ENCODE measurements at regions of chr2 and their contacts with region 1.

Region 1: DNA sequence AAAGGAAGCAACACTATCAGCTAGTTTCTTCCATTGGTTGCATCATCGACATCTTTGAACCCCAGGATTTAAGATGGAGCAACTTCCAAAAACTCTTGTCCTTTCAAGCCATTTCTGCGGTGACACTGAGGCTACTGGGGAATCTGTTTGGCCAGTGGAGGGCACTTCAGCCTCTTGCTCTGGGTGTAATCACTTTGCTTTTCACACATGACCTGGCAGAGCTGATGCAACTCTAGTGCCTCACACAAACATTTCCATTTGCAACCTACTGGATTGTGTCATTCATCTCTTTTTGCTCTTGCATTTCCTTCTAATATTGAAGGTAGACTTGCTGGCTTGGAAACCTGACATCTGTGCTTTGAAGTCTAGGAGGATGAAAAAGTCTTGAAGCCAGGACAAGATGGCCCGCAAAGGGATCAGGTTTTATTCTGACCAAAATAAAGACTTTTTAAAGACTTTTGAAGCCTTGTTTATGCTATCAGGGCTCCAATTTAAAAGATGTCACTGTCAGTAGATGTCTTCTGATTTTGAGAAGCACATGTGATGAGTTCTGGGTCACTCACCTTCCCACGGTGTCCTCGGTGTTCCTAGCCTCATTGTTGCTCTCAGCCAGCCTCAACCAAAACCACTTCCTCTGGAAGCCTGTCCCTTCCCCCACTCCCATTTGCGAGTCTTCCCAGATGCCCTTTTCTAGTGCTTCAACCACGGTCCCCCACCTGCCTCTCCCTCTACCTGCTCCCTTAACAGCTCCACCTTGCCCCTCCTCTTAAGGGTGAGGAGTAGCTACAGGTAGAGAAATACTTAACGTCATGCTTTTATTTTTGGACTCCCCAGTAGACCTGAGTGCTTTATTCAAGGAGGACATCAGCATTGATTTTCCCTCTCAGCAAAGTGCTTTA is 69.7 kb upstream of the KCNE4 start:
- DNase-seq: peak; percentile 58
- H3K4me3 ChIP-seq: no peak overlapping the region
- H3K27ac ChIP-seq: no peak overlapping the region
- H3K4me1 ChIP-seq: peaks cover 7% of the 10 kb centered on the region
- H3K27me3 ChIP-seq: no peaks in the 10 kb centered on the region
- CTCF ChIP-seq: peak; percentile 49 to 77

Region 2: DNA sequence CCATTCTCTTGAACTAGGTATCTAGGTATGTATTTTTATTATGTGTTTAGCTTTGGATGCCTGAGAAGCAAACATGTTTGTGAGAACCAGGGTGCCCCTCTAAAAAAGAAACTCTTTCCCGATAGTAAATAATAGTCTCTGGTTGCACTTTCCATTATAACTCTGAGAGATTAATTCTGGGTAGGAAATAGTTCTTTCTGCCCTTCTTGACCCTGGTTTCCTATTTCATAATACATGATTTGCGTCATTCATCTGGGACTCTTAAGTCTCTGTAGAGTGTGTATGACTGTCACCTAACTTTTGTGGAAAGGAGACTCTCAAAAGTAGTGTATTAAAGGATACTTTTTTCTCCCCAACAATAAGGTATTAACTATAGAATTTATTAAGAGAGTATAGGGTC is 89.9 kb before region 1 on chr2:
- CTCF ChIA-PET with region 1: no interaction called
- dilution Hi-C with region 1: no loop called
- in situ Hi-C with region 1: no loop called
- intact Hi-C with region 1: no loop called
- DNase-seq: no peak
- H3K4me3 ChIP-seq: no peak overlapping the region
- H3K27ac ChIP-seq: peak overlapping the region; percentile 11
- H3K4me1 ChIP-seq: peaks cover 32% of the 10 kb centered on the region
- H3K27me3 ChIP-seq: no peaks in the 10 kb centered on the region
- CTCF ChIP-seq: no peak

Region 3: DNA sequence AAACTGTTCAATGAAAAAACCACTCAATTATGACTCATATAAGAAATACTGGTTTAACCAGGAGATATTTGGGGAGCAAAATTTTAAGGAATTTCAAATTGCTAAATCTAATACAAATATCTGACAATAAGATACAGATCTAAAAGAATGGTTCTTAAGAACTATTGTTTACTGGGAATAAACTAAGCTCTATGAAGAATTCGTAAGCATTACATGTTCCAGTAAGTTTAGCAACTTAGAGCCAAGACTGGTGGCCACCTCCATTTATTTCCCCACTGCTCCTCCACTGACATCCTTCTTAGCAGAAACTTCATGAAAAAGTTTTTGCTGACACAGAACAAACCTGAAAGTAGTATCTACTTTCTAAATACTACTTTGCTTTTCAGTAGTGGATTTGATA is 38.5 kb before region 1 on chr2:
- CTCF ChIA-PET with region 1: no interaction called
- dilution Hi-C with region 1: no loop called
- in situ Hi-C with region 1: no loop called
- intact Hi-C with region 1: no loop called
- DNase-seq: no peak
- H3K4me3 ChIP-seq: no peak overlapping the region
- H3K27ac ChIP-seq: no peak overlapping the region
- H3K4me1 ChIP-seq: peaks cover 12% of the 10 kb centered on the region
- H3K27me3 ChIP-seq: no peaks in the 10 kb centered on the region
- CTCF ChIP-seq: no peak

Region 4: DNA sequence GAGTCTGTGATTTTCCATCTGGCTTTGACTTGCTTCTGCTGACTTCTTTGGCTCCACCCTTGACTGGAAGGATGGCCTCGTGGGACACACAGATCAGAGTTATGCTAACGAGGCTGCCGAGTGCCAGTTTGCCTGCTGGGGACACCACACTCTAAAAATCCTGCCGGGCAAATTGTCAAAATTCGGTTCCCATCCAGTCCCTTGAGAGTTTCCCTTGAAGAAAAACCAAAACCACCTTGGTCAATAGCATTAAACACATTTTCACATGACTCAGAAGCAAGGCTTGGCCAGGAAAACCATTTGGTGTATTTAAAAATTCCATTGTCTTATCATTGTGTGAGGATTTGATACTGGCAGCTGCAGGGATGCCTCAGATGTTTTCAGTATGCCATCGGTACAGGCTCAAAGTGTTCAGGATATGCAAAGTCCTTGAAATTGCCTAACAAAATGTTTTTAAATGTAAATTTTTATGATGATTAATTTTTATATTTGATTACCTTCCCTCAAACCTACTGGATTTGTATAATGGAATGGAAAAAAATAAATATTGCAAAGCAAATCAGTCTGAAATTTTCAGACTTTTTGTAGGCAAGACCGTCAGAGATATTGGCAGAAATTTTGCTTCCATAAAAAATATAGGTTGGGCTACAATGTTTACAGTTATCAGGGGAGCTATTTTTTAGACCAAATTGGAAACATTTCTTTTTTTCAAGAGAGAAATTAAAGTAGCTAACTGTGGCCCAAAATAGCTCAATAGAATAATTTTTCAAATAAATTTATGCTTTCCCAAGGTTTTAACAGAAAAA is 111.4 kb after region 1 on chr2:
- CTCF ChIA-PET with region 1: no interaction called
- dilution Hi-C with region 1: no loop called
- in situ Hi-C with region 1: loop called in 1 of 2 experiments (anchors 10 kb)
- intact Hi-C with region 1: no loop called
- DNase-seq: peak; percentile 63
- H3K4me3 ChIP-seq: no peak overlapping the region
- H3K27ac ChIP-seq: no peak overlapping the region
- H3K4me1 ChIP-seq: peaks cover 9% of the 10 kb centered on the region
- H3K27me3 ChIP-seq: no peaks in the 10 kb centered on the region
- CTCF ChIP-seq: no peak

Measured in mammary epithelial cell (primary cell).